ENCODE measurements at regions of chr16 and their contacts with region 1.

Region 1: DNA sequence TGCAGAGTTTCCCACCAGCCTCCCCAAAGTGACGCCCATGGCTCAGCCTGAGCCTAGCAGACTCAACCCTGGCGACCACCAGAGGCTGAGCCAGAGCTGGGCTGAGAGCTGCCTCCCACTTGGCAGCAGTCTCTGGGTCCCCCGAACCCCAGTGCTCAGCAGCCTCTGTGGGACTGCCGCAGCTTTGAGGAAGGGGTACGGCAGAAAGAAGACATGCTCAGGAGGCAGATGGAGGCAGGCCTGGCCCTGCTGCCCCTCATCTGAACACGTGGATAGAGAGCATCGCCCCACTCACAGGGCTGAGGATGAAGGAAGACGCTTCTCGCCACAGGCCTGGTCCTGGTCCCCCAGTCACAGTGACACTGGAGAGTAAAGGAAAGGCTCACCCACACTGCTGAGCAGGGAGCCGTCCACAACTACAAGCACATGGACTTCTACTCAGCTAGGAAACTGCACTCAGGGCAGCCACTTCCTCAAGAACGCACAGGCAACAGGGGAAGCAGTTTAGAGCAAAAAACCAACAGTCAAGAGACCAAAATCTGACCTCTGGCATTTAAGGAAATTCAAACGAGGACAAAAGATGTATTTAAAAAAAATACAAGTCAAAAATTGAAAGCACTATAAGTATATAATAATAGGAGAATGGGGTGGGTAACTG is 45.2 kb upstream of the GSG1L start:
- H3K4me3 Mint-ChIP-seq: no peak overlapping the region
- H3K27ac Mint-ChIP-seq: peak overlapping the region; percentile 72
- H3K4me1 Mint-ChIP-seq: peaks cover 59% of the 10 kb centered on the region
- H3K27me3 Mint-ChIP-seq: no peaks in the 10 kb centered on the region

Region 2: GRCh38 chr16:28166394-28167208 is 57.9 kb after region 1 on chr16:
- intact Hi-C with region 1: loop called (anchors 5 kb)
- H3K4me3 Mint-ChIP-seq: no peak overlapping the region
- H3K27ac Mint-ChIP-seq: no peak overlapping the region
- H3K4me1 Mint-ChIP-seq: peaks cover 56% of the 10 kb centered on the region
- H3K27me3 Mint-ChIP-seq: no peaks in the 10 kb centered on the region

Measured in dendritic cell treated with granulocyte-macrophage colony-stimulating factor and Interleukin-4, amounts not matched to agents 40 ng/mL and 50 ng/mL, for 4 days (primary cell).